Calu3 (cell line): ENCODE measurements at regions of chr17 and their contacts with region 1.

Region 1: DNA sequence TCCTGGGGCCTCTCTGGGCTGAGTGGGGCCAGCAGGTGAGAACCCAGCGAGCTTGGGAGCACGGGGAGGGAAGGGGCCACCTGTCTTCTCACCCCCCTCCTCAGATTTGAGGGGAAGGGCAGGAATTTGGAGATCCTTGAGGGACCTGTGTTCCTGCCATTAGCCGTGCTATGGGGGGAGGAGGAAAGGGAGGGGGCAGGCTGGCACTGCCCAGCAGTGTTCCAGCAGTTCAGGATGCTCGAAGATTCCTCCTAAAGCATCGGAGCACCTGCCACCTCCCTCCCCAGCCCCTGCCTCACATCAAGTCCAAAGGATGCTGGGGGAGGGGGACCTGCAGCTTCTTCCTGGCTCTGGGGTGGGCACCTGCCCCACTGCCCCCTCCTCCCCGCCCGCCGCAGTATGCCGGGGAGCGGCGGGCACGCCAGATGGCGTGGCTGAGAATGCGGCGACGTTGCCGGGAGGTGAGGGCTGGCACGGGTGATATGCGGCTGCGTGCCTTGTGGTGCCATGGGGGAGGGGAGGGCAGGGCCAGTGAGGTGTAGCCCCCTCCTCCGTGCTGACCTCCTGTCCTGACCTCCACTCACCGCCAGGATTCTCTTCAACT is 4.7 kb upstream of the NEUROD2 start:
- DNase-seq: no peak
- H3K4me3 Mint-ChIP-seq: no peak overlapping the region
- H3K27ac Mint-ChIP-seq: peak overlapping the region; percentile 2
- H3K4me1 Mint-ChIP-seq: peaks cover 20% of the 10 kb centered on the region
- H3K27me3 Mint-ChIP-seq: peaks cover 100% of the 10 kb centered on the region
- CTCF ChIP-seq: no peak

Region 2: GRCh38 chr17:39579318-39580081 is 32.9 kb before region 1 on chr17:
- CTCF ChIA-PET with region 1: interaction called, 42,089 read pairs
- intact Hi-C with region 1: no loop called
- DNase-seq: peak; percentile 52
- H3K4me3 Mint-ChIP-seq: no peak overlapping the region
- H3K27ac Mint-ChIP-seq: no peak overlapping the region
- H3K4me1 Mint-ChIP-seq: no peaks in the 10 kb centered on the region
- H3K27me3 Mint-ChIP-seq: peaks cover 88% of the 10 kb centered on the region
- CTCF ChIP-seq: no peak